Activated naive CD4-positive, alpha-beta T cell treated with anti-CD3 and anti-CD28 coated beads for 36 hours (primary cell): ENCODE measurements at regions of chr1 and their contacts with region 1.

Region 1: DNA sequence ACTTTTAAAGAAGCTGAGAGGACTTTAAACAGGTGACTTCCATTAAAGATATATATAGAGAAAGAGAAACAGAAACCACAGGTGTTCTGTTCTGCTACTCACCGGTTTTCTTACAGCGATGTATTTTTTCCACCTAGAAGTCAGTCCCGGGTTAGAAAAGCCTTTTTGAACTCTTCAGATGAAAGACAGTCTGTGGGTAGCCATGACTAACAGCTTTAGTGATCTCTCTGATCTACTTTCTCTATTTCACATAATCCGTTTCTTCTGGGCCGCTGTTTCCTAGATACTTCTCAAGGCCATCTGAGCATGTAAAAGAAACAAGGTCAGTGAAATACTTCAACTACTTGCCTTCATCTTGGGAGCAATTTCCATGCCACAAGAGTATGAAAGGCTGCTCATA is 25.1 kb downstream of the WDR64 start:
- DNase-seq: peak; percentile 36
- H3K4me3 Mint-ChIP-seq: peak overlapping the region; percentile 4
- H3K27ac Mint-ChIP-seq: peak overlapping the region; percentile 37
- H3K4me1 Mint-ChIP-seq: peaks cover 46% of the 10 kb centered on the region
- H3K27me3 Mint-ChIP-seq: no peaks in the 10 kb centered on the region

Region 2: DNA sequence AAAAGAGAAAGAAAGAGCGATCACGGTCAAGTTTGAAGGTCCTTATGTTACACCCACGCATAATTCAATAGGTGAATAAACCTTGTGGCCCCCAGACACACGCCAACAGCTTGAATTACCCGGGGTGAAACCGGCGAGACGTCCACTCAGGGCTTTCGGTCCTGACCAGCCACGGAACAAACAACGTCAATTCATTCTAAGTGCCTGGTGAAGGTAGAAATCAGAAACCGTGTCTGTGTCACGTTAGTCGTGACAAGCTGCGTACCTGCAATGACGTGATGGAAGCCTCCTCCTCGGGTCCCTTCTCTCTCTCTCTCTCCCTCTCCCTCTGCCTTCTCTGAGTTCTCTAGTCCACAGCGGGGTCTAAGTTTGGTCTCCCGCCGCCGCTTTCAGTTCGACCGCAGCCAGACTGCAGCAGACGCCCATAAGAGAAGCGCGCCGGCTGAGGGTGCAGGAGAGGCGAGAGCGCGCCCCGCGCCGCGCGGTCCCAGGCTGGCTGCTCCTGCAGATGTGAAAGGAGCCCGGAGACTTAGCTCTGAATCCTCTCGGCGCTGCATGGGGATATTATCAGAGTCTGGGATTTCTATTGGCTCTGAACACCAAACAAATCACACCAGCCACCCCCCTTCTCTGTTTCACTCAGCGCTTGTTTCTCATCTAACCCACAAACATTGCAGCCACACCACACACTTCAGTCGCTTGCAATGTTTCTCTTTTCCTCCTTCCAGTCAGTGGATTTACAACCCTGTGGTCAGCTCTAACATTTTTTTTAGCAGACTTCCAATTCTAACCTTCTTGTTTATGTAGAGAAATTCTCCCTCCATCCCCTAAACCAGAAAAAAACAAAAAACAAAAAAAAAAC is 1065.4 kb before region 1 on chr1 and contains the start of gene GREM2:
- CTCF ChIA-PET with region 1: no interaction called
- intact Hi-C with region 1: loop called (anchors 1 kb)
- DNase-seq: peak; percentile 72
- H3K4me3 Mint-ChIP-seq: peak within 1 kb of the TSS; percentile 90
- H3K27ac Mint-ChIP-seq: peak within 1 kb of the TSS; percentile 69
- H3K4me1 Mint-ChIP-seq: peaks cover 30% of the 10 kb centered on the region
- H3K27me3 Mint-ChIP-seq: peaks cover 42% of the 10 kb centered on the region
- total RNA-seq, gene GREM2: 0.17 to 0.25 TPM

Region 3: GRCh38 chr1:241592273-241592958 is 84.8 kb before region 1 on chr1:
- CTCF ChIA-PET with region 1: no interaction called
- intact Hi-C with region 1: loop called (anchors 1 kb)
- DNase-seq: peak; percentile 7
- H3K4me3 Mint-ChIP-seq: no peak overlapping the region
- H3K27ac Mint-ChIP-seq: peak overlapping the region; percentile 79
- H3K4me1 Mint-ChIP-seq: peaks cover 29% of the 10 kb centered on the region
- H3K27me3 Mint-ChIP-seq: no peaks in the 10 kb centered on the region

Region 4: DNA sequence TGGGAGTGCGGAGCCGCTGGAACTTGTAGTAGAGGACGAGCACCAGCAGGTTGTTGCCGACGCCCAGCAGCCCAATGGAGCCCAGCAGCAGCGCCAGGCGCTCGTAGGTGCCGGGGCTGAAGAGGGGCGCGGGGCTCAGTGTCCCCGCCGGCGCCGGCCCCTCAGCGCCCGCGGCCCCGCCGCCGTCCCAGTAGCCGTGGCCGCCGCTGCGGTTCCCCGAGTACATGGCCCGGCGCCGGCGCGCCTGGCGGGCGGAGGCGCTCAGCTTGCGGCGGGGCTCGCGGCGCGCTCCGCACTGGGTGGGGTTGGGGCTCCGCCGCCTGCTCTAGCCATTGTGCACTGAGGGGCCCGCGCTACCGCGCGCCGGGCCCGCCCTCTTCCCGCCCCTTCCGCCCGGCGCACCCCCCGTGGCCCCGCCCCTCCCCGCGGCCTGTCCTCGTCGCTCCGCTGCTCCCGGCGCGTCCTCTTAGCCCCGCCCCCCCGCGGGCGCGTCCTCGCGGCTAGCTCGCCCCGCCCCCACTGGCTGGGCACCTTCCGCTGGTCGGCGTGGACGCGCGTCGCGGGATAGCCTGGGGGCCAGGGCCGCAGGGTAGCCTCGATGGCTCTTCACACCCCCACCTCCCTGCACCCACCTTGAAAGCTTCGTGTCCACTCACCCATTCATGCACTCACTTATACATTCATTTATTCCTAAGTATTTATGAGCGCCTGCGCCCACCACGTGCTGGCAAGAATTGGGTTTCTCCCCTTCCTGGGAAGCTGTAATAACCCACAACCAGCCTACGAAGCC is 37.0 kb before region 1 on chr1 and contains the starts of genes CHML and OPN3:
- CTCF ChIA-PET with region 1: interaction called, 3 read pairs
- intact Hi-C with region 1: loop called (anchors 1 kb)
- DNase-seq: peak; percentile 93
- H3K4me3 Mint-ChIP-seq: peak within 1 kb of the TSS; percentile 74
- H3K27ac Mint-ChIP-seq: peak within 1 kb of the TSS; percentile 81
- H3K4me1 Mint-ChIP-seq: peaks cover 39% of the 10 kb centered on the region
- H3K27me3 Mint-ChIP-seq: no peaks in the 10 kb centered on the region
- total RNA-seq, gene CHML: 19.9 to 21.1 TPM
- total RNA-seq, gene OPN3: 7.7 to 9.0 TPM

Region 5: GRCh38 chr1:241716915-241717656 is 39.9 kb after region 1 on chr1:
- CTCF ChIA-PET with region 1: interaction called, 3 read pairs
- intact Hi-C with region 1: loop called (anchors 1 kb)
- DNase-seq: peak; percentile 35
- H3K4me3 Mint-ChIP-seq: no peak overlapping the region
- H3K27ac Mint-ChIP-seq: peak overlapping the region; percentile 60
- H3K4me1 Mint-ChIP-seq: peaks cover 22% of the 10 kb centered on the region
- H3K27me3 Mint-ChIP-seq: no peaks in the 10 kb centered on the region